Right cardiac atrium (tissue), 5 donors: ENCODE measurements at regions of chr12 and their contacts with region 1.

Region 1: DNA sequence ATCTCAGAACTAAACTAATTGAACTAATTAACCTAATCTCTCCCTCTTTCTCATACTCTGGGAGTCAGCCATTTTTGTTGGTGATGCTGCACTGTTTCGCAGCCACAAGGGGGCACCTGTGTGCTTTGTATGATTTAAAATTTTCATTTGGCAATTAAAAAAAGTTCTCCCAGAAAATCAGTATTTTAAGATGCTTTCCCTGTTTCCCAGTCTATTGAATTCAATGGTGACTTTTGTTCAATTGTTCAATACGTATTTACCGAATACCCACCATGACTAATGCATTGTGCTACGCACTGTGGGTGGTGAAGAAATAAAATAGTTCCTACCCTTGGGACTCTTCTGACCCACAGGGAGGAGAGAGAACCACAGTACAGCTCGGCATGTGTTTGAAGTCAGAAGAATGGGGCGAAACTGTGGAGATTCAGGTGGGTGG is 63.7 kb downstream of the ZNF664 start:
- DNase-seq: peak; percentile 39 to 72 (median 68)
- ATAC-seq: peak in 1 of 2 donors; percentile 56
- H3K4me3 ChIP-seq: no peak overlapping the region
- H3K27ac ChIP-seq: no peak overlapping the region
- H3K4me1 ChIP-seq: no peaks in the 10 kb centered on the region
- H3K27me3 ChIP-seq: no peaks in the 10 kb centered on the region

Region 2: GRCh38 chr12:123670882-123671728 is 365.6 kb before region 1 on chr12 and contains the start of gene TCTN2:
- intact Hi-C with region 1: no loop called
- DNase-seq: peak; percentile 96 to 99 (median 98)
- ATAC-seq: peak; percentile 99
- H3K4me3 ChIP-seq: peak within 1 kb of the TSS; percentile 76
- H3K27ac ChIP-seq: no peak within 1 kb of the TSS
- H3K4me1 ChIP-seq: peaks cover 2% of the 10 kb centered on the region
- H3K27me3 ChIP-seq: no peaks in the 10 kb centered on the region
- total RNA-seq, gene TCTN2: 4.5 to 5.8 (median 4.7) TPM

Region 3: GRCh38 chr12:123905319-123905925 is 131.3 kb before region 1 on chr12:
- intact Hi-C with region 1: loop called in 1 of 4 experiments (anchors 10 kb)
- DNase-seq: peak in 2 of 3 donors; percentile 37 to 58
- ATAC-seq: peak in 1 of 2 donors; percentile 50
- H3K4me3 ChIP-seq: no peak overlapping the region
- H3K27ac ChIP-seq: no peak overlapping the region
- H3K4me1 ChIP-seq: no peaks in the 10 kb centered on the region
- H3K27me3 ChIP-seq: no peaks in the 10 kb centered on the region

Region 4: GRCh38 chr12:123966596-123966995 is 70.1 kb before region 1 on chr12:
- intact Hi-C with region 1: no loop called
- DNase-seq: no peak
- ATAC-seq: no peak
- H3K4me3 ChIP-seq: no peak overlapping the region
- H3K27ac ChIP-seq: no peak overlapping the region
- H3K4me1 ChIP-seq: peaks cover 8% of the 10 kb centered on the region
- H3K27me3 ChIP-seq: no peaks in the 10 kb centered on the region

Region 5: DNA sequence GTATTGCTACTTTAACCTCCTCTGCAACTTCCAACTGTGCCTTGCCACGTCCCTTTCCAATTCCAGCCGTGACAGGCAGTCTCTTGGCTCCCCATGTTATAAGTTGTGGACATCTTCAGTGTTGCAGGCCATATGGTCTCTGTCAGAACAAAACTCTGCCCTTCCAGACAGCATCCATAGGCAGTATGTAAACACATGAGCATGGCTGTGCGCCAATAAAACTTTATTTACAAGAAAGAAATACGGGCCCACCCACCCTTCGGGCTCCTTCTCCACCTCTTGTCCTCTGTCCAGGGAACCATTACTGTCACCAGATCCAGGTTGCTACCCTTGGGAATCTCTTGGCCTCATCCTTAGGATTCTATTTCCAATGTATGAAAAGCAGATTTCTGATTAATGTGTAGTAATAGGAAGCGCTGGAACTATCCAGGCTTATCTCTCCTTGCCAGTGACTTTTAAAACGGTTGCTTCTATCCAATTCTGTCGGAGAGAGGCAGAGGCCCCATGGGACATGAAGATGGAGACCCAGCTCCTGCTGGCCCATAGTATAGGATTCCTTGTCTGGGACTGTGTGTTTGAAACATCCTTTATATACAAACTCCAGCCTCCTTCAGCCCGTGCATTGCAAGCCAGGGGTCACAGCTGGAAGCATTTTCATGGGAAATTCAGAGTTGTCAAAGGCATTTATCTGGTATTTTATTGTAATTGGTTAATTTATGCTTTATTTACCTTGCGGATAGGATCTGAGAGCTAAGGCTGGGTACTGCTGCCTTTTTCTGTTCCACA is 50.8 kb after region 1 on chr12:
- intact Hi-C with region 1: no loop called
- DNase-seq: no peak
- ATAC-seq: no peak
- H3K4me3 ChIP-seq: no peak overlapping the region
- H3K27ac ChIP-seq: no peak overlapping the region
- H3K4me1 ChIP-seq: no peaks in the 10 kb centered on the region
- H3K27me3 ChIP-seq: no peaks in the 10 kb centered on the region

Region 6: GRCh38 chr12:124321040-124321481 is 284.4 kb after region 1 on chr12:
- intact Hi-C with region 1: loop called in 3 of 4 experiments (anchors 5 kb)
- DNase-seq: peak; percentile 68 to 89 (median 89)
- ATAC-seq: peak; percentile 75 to 82
- H3K4me3 ChIP-seq: no peak overlapping the region
- H3K27ac ChIP-seq: no peak overlapping the region
- H3K4me1 ChIP-seq: no peaks in the 10 kb centered on the region
- H3K27me3 ChIP-seq: no peaks in the 10 kb centered on the region

Region 7: GRCh38 chr12:124906606-124907261 is 870.0 kb after region 1 on chr12:
- intact Hi-C with region 1: loop called in 1 of 4 experiments (anchors 10 kb)
- DNase-seq: peak; percentile 79 to 90 (median 82)
- ATAC-seq: peak; percentile 37 to 46
- H3K4me3 ChIP-seq: no peak overlapping the region
- H3K27ac ChIP-seq: peak overlapping the region; percentile 26
- H3K4me1 ChIP-seq: peaks cover 12% of the 10 kb centered on the region
- H3K27me3 ChIP-seq: no peaks in the 10 kb centered on the region